ENCODE measurements at regions of chr2 and their contacts with region 1.

Region 1: DNA sequence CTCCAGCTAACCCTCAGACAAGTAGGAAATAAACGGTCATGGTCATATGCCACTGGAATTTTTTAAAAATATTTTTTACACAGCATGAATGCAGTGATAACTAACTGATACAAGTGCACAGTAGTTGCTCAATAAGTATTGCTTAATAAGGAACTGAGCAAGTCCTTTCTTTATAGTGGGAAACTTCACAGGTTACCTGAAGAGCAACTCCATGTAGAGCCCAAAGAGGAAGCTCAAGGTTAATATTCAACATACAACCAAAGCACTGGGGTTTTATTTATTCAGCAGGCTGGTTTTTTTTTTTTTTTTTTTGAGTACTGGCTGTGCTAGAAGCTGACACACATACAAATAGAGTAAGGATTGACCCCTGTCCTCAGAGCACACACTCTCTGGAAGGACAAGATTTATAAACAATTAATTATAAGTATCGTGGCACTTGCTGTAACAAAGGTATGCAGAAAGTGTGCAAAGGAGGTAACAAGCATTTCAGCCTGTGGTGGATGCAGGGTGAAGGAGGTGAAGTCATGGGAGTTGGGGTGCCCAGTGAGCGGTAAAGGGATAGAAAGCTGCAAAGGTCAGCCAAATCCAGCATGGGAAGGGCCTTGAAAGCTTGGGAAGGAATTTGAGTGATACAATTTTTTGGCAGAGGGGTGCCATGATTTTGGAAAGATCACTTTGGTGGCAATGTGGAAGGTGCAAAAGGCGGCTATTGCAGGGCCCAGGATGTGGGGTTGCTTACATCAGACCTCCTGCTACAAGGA is 52.7 kb downstream of the ATOH8 start:
- DNase-seq: no peak
- H3K4me3 ChIP-seq: no peak overlapping the region
- H3K27ac ChIP-seq: no peak overlapping the region
- H3K4me1 ChIP-seq: peaks cover 0 to 21% (median 10%) of the 10 kb centered on the region in 4 donors
- H3K27me3 ChIP-seq: no peaks in the 10 kb centered on the region
- CTCF ChIP-seq: no peak
- EP300 ChIP-seq: no peak
- POLR2A ChIP-seq: no peak

Region 2: DNA sequence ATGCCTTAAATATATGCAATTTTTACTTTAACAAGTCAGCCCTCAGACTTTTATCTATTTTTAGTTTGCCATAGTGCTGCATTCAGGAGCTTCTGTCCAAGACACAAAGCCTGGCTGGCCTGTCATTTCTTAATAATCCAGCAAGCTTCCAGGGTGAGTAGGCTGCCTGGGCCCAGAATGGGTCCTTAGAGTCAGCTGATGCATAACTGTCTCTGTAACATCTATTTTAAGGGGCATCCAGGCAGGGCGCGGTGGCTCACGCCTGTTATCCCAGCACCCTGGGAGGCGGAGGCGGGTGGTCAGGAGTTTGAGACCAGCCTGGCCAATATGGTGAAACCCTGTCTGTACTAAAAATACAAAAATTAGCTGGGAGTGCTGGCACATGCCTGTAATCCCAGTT is 124.2 kb before region 1 on chr2:
- in situ Hi-C with region 1: no loop called
- intact Hi-C with region 1: loop called (anchors 2 kb)
- DNase-seq: no peak
- H3K4me3 ChIP-seq: no peak overlapping the region
- H3K27ac ChIP-seq: no peak overlapping the region
- H3K4me1 ChIP-seq: peaks cover 4 to 11% (median 6%) of the 10 kb centered on the region in 4 donors
- H3K27me3 ChIP-seq: no peaks in the 10 kb centered on the region
- CTCF ChIP-seq: no peak
- EP300 ChIP-seq: no peak
- POLR2A ChIP-seq: no peak

Region 3: GRCh38 chr2:85741833-85742455 is 64.6 kb before region 1 on chr2:
- in situ Hi-C with region 1: loop called in 3 of 4 experiments (anchors 5 kb)
- intact Hi-C with region 1: no loop called
- DNase-seq: peak; percentile 51
- H3K4me3 ChIP-seq: no peak overlapping the region
- H3K27ac ChIP-seq: peak overlapping the region; percentile 80 to 88 (median 84)
- H3K4me1 ChIP-seq: peaks cover 26 to 56% (median 42%) of the 10 kb centered on the region in 4 donors
- H3K27me3 ChIP-seq: no peaks in the 10 kb centered on the region
- CTCF ChIP-seq: no peak
- EP300 ChIP-seq: no peak
- POLR2A ChIP-seq: no peak

Region 4: DNA sequence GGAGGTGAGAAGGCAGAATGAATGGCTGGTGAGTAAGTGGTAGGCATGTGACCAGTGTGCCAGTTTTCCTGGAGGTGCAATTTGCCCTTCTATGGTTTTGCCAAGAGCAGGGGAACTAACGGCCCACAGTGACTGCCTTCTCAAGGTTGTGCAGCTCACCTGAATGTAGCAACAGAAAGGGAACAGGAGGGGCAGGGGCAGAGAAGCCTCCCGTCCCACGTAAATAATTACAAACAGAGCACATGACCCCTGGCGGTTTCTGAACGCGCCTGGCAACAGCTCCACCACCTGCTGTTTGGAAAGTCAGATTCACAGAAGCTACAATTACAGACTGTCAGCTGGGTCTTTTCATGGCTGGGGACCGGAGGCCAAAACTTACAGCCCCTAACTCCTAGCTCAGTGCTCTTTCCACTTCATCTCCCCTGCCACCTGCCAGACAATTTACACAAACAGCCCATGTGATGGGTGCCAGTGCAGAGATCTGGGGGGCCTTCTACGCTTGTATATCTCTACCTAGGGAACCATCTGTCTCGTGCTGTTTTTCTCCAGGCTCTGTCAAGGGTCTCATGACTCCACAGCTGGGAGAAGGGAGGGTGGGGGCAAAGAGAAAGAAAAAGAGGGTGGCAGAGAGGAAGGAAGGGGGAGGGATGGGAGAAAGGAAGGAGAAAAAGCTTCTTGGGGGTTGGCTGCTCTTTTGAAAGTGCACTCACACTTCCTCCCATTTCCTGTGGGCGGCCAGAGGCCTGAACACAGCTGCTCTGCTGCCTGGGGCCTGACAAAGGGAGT is 229.5 kb after region 1 on chr2:
- in situ Hi-C with region 1: no loop called
- intact Hi-C with region 1: no loop called
- DNase-seq: peak; percentile 80
- H3K4me3 ChIP-seq: no peak overlapping the region
- H3K27ac ChIP-seq: peak overlapping the region; percentile 82 to 87 (median 85)
- H3K4me1 ChIP-seq: peaks cover 26 to 42% (median 33%) of the 10 kb centered on the region in 4 donors
- H3K27me3 ChIP-seq: no peaks in the 10 kb centered on the region
- CTCF ChIP-seq: peak in 3 of 5 experiments; percentile 11 to 36 (median 25)
- EP300 ChIP-seq: no peak
- POLR2A ChIP-seq: no peak